ENCODE measurements at regions of chr6 and their contacts with region 1.

Region 1: GRCh38 chr6:2940010-2940850 is 31.1 kb downstream of the SERPINB6 start:
- DNase-seq: peak; percentile 72
- ATAC-seq: peak; percentile 82
- H3K4me3 Mint-ChIP-seq: peak overlapping the region; percentile 84
- H3K27ac Mint-ChIP-seq: peak overlapping the region; percentile 96
- H3K4me1 Mint-ChIP-seq: peaks cover 44% of the 10 kb centered on the region
- H3K27me3 Mint-ChIP-seq: no peaks in the 10 kb centered on the region

Region 2: GRCh38 chr6:1162367-1163275 is 1777.6 kb before region 1 on chr6:
- POLR2A ChIA-PET with region 1: no interaction called
- DNase-seq: no peak
- ATAC-seq: no peak
- H3K4me3 Mint-ChIP-seq: no peak overlapping the region
- H3K27ac Mint-ChIP-seq: no peak overlapping the region
- H3K4me1 Mint-ChIP-seq: no peaks in the 10 kb centered on the region
- H3K27me3 Mint-ChIP-seq: peaks cover 2% of the 10 kb centered on the region

Region 3: GRCh38 chr6:2818593-2818992 is 121.6 kb before region 1 on chr6:
- POLR2A ChIA-PET with region 1: no interaction called
- DNase-seq: no peak
- ATAC-seq: no peak
- H3K4me3 Mint-ChIP-seq: no peak overlapping the region
- H3K27ac Mint-ChIP-seq: no peak overlapping the region
- H3K4me1 Mint-ChIP-seq: peaks cover 6% of the 10 kb centered on the region
- H3K27me3 Mint-ChIP-seq: peaks cover 1% of the 10 kb centered on the region

Region 4: DNA sequence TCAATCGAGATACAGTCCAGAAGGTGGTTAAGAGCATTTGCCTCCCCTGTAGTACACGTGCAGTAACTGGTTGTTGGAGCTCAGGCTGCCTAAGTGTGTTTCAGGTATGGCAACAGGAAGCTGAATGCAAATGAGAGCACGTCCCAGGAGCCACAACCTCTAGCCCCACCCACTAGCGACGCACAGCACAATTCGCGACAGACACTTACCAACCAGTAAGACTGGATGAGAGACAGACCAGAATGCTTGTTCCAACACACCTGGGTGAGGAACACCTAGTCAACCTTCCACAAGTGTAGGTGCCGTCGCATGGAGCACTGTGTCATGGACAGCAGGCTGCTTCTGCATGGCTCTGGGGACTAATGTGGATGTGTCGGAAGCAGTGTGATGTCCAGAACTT is 91.4 kb before region 1 on chr6:
- POLR2A ChIA-PET with region 1: interaction called, 11 read pairs
- DNase-seq: peak; percentile 61
- ATAC-seq: peak; percentile 81
- H3K4me3 Mint-ChIP-seq: peak overlapping the region; percentile 66
- H3K27ac Mint-ChIP-seq: peak overlapping the region; percentile 90
- H3K4me1 Mint-ChIP-seq: peaks cover 37% of the 10 kb centered on the region
- H3K27me3 Mint-ChIP-seq: no peaks in the 10 kb centered on the region

Region 5: DNA sequence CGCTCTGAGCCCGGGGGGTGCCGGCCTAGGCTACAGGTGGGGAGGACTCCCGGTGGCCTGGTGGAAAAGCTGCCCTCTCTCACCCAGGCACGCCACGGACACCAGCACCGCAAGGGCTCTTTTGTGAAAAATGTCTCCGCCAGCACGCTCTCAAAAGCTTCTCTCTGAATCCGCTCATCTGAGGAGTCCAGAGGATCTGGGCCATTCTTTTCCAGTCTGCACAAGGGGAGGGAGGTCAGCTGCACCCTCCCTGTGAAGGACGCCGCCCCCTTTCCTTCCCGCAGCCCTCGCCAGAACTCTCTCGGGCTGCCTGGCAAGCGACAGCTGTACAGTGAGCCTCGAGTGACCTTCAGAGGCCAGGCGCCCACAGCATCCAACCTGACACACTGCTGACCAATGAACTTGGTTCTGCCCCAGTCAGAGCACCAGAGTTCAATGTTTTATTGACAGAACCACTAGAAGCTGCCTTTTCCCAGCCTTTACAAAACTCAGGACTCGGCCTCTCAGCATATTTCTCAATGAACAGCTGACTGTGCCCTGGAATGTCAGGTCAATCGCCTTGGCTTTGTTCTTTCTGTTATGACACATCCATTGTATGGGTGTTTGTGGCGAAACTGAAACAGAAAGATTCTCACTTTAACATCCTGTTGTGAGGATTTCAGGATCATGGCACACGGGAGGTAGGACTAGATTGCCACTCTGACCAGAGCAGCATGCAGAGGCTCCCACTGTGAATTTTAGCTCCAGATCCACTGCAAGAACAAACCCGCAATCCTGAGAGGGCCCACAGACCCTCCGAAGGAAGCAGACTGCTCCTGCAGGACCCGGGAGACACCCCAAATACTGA is 63.8 kb before region 1 on chr6:
- POLR2A ChIA-PET with region 1: interaction called, 12 read pairs
- DNase-seq: no peak
- ATAC-seq: peak; percentile 18
- H3K4me3 Mint-ChIP-seq: peak overlapping the region; percentile 93
- H3K27ac Mint-ChIP-seq: peak overlapping the region; percentile 98
- H3K4me1 Mint-ChIP-seq: peaks cover 50% of the 10 kb centered on the region
- H3K27me3 Mint-ChIP-seq: no peaks in the 10 kb centered on the region

Region 6: DNA sequence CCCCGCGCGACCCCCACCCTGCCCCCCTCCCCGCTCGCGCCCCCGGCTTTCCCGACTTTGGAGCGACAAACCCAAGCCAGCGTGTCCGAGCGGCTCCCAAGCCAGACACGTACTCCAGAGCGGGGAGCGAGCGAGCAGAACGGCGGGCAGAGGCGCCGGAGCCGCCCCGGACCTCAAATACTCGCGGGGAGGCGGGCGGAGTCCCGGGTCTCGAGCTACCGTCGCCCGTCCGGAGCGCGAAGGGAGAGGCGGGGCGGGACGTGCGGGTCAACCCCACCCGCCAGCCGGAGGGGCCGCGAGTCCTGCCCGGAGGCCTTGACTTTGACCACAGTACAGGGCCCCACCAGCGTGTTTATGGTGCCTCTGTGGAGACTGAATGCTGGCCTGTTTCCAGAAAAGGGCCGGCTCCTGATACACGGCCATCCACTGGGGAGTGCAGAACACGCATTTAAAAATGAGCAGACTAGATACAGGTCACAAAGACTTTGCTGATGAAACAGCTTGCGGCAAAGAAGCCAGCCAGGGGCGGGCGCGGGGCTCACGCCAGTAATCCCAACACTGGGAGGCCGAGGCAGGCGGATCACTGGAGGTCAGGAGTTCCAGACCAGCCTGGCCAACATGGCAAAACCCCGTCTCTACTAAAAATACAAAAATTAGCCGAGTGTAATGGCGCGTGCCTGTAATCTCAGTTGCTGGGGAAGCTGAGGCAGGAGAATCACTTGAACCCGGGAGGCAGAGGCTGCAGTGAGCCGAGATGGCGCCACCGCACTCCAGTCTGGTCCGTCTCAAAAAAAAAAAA is 31.4 kb after region 1 on chr6 and contains the start of gene SERPINB6:
- POLR2A ChIA-PET with region 1: interaction called, 32 read pairs
- DNase-seq: peak; percentile 72
- ATAC-seq: peak; percentile 66
- H3K4me3 Mint-ChIP-seq: peak within 1 kb of the TSS; percentile 90
- H3K27ac Mint-ChIP-seq: peak within 1 kb of the TSS; percentile 85
- H3K4me1 Mint-ChIP-seq: peaks cover 26% of the 10 kb centered on the region
- H3K27me3 Mint-ChIP-seq: peaks cover 5% of the 10 kb centered on the region
- total RNA-seq, gene SERPINB6: 85.3 to 85.6 TPM